Heart left ventricle (tissue), 16 donors: ENCODE measurements at regions of chr5 and their contacts with region 1.

Region 1: DNA sequence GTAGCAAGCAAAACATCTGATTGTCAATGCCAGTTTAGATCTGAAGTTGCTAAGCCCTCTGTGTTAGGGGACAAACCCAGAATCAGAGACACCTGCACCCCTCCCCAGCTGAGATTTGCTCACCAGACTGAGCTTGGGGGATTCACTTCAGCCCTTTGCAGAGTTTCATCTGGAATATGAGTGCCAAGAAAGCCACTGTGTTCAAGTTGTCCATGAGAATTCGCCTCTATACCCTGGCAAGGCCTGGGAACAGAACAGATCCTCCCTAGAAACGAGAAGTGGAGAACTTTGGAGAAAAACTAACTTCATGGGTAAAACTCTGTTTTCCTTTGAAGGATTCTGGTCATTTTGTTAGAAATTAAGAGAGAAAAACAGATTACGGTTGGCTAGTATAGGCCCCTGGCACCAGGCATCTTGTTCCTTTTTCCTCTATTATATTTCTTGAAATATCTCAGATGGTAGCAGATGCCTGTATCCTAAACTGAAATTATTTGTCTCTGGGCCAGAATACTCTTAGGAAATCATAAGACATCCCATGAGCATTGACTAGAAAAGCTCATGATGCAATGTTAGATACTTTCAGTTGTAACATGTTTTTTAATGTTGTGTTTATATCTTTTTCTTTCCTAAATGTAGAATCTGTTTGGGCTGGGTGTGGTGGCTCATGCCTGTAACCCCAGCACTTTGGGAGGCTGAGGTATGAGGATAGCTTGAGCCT is 64.4 kb downstream of the SNX18 start:
- DNase-seq: no peak
- ATAC-seq: peak in 3 of 4 donors; percentile 27 to 68 (median 54)
- H3K4me3 ChIP-seq: no peak overlapping the region
- H3K27ac ChIP-seq: peak overlapping the region in 11 of 12 donors; percentile 26 to 82 (median 50)
- H3K4me1 ChIP-seq: peaks cover 0 to 45% (median 13%) of the 10 kb centered on the region in 12 donors
- H3K27me3 ChIP-seq: no peaks in the 10 kb centered on the region
- CTCF ChIP-seq: no peak
- POLR2A ChIP-seq: no peak

Region 2: DNA sequence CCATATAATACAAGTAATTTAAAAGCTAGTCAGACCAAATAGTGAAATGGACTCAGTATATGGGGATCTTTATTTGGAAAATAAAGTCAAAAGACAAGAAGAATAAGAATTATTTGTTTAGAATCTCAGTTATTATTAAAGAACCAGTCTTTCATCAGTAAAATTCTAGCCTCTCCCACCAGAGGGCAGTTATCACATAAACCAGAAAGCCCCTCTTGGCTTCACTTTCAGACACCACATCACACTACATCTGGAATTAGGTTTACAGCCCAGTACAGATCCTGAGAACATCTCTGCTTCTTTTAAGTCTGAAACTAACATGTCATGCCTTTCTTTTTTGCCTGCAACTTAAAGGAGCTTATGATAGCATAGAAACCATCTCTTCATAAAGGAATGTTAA is 138.7 kb before region 1 on chr5:
- intact Hi-C with region 1: no loop called
- DNase-seq: no peak
- ATAC-seq: no peak
- H3K4me3 ChIP-seq: no peak overlapping the region
- H3K27ac ChIP-seq: no peak overlapping the region
- H3K4me1 ChIP-seq: peaks cover 0 to 30% (median 11%) of the 10 kb centered on the region in 12 donors
- H3K27me3 ChIP-seq: no peaks in the 10 kb centered on the region
- CTCF ChIP-seq: peak in 8 of 12 donors; percentile 23 to 55 (median 40)
- POLR2A ChIP-seq: no peak

Region 3: GRCh38 chr5:54651482-54652076 is 69.6 kb after region 1 on chr5:
- intact Hi-C with region 1: loop called in 1 of 10 experiments (anchors 2 kb)
- DNase-seq: peak; percentile 80 to 93 (median 87)
- ATAC-seq: peak; percentile 36 to 69 (median 65)
- H3K4me3 ChIP-seq: no peak overlapping the region
- H3K27ac ChIP-seq: peak overlapping the region in 10 of 12 donors; percentile 7 to 83 (median 38)
- H3K4me1 ChIP-seq: peaks cover 0 to 49% (median 25%) of the 10 kb centered on the region in 12 donors
- H3K27me3 ChIP-seq: no peaks in the 10 kb centered on the region
- CTCF ChIP-seq: no peak
- POLR2A ChIP-seq: no peak

Region 4: GRCh38 chr5:54774281-54775170 is 192.5 kb after region 1 on chr5:
- intact Hi-C with region 1: no loop called
- DNase-seq: peak; percentile 66 to 84 (median 72)
- ATAC-seq: peak; percentile 88 to 97 (median 95)
- H3K4me3 ChIP-seq: peak overlapping the region in 2 of 12 donors; percentile 7 to 20
- H3K27ac ChIP-seq: peak overlapping the region in 4 of 12 donors; percentile 45 to 62 (median 47)
- H3K4me1 ChIP-seq: peaks cover 0 to 15% (median 0%) of the 10 kb centered on the region in 12 donors
- H3K27me3 ChIP-seq: no peaks in the 10 kb centered on the region
- CTCF ChIP-seq: no peak
- POLR2A ChIP-seq: no peak